Activated CD4-positive, alpha-beta T cell treated with anti-CD3 and anti-CD28 coated beads for 36 hours (primary cell): ENCODE measurements at regions of chr4 and their contacts with region 1.

Region 1: DNA sequence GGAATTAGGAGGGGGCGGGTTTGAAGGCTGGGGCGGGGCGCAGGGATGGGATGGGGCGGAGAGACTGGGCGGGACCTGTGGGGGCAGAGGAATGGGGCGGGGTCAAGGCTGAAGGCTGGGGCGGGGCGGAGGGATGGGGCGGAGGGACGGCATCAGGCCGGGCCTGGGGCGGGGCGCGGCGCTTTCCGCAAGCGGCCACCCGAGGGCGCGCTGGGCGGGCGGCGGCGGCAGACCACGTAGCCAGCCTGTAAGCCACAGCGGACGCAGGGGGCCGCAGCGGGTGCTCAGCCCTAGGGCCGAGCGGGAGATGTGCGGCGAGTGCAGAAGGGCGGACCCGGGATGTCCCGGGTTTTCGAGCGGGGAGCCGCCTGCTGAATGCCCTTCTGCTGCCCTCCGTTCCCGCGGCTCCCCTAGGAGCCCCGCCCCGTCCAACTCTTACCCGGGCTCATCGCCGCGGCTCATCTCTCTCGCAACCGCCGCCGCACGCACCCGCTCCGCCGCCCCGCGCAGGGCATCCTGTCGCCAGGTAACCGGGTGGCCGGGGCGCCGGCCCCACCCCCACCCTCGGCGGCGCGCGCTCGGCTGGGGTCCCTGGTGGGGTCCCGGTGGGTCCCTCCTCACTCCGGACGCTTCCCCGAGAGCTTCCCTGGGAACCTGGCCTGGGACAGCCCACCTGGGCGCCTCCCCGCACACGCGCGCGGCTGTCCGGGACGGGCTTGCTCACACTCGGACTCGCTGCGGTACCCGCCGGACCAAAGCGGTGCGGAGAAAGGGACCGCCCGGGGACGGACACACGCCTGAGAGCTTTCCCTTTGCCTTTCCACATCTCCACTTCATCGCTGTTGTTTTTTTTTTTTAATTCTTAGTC is at the start of gene CCDC110:
- DNase-seq: peak; percentile 98
- ATAC-seq: peak; percentile 97
- H3K4me3 Mint-ChIP-seq: peak within 1 kb of the TSS; percentile 82
- H3K27ac Mint-ChIP-seq: peak within 1 kb of the TSS; percentile 75
- H3K4me1 Mint-ChIP-seq: peaks cover 4% of the 10 kb centered on the region
- H3K27me3 Mint-ChIP-seq: peaks cover 9% of the 10 kb centered on the region
- total RNA-seq, gene CCDC110: 0.34 to 0.40 TPM

Region 2: DNA sequence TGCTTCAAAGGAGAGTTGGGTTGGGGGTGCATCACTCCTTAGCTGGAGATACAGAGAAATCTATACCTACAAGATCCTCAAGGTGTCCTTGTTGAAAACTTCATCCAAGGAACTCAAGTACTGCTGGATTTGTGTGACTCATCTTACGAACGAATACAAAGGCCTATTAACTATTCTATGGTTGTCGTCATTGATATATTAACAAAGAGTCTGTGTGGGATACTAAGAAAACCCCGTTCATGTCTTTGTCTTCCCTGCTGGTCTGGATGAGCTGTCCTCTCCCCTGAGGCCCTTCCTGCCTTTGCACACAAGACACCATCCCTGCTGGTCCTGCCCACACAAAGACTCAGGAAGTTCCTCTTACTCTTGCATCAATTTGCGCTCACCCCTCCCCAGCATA is 942.2 kb before region 1 on chr4:
- CTCF ChIA-PET with region 1: no interaction called
- POLR2A ChIA-PET with region 1: no interaction called
- intact Hi-C with region 1: loop called in 1 of 2 experiments (anchors 5 kb)
- DNase-seq: no peak
- ATAC-seq: no peak
- H3K4me3 Mint-ChIP-seq: no peak overlapping the region
- H3K27ac Mint-ChIP-seq: no peak overlapping the region
- H3K4me1 Mint-ChIP-seq: peaks cover 47% of the 10 kb centered on the region
- H3K27me3 Mint-ChIP-seq: no peaks in the 10 kb centered on the region

Region 3: DNA sequence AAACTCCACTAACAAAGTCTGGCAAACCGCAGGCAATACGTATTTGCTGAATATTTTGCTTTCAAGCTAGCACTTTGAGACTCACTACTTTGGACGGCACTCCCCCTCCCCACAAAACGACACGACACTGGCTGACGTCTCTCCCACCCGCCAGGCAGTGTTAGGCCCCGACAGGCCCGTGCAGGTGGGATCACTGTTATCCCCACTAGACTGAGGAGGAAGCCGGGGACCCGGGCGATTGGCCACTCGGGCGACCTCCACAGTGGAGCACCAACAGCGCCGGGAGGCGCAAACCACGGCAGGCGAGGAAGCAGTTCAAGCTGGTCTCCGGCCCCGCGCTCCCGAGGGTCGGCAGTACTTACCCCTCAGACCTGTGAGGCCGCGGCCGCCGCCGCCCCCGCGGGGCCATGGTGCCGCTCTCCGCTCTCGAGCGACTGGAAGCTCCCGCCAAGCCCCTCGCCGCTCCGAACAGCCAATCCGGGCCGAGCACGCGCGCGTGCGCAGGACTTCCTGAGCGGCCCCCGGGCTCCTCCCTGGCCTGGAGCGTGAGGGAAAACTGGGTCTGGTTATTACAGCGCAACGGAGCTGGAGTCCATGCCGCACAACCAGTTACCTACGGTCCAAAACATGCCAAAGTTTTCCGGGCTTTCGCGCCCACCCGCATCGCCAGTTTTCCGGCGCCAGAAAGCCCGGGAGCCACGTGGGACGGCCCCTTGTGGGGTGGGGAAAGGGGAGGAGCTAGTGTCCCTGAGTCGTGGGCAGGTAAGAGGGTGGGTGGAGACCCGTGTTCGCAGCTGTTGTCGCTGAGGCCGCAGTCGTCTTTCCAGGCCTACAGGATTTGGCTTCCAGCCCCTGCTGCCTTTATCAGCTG is 737.6 kb before region 1 on chr4 and contains the start of gene CENPU:
- CTCF ChIA-PET with region 1: no interaction called
- POLR2A ChIA-PET with region 1: no interaction called
- intact Hi-C with region 1: loop called in 1 of 2 experiments (anchors 1 kb)
- DNase-seq: peak; percentile 98
- ATAC-seq: peak; percentile 95
- H3K4me3 Mint-ChIP-seq: peak within 1 kb of the TSS; percentile 98
- H3K27ac Mint-ChIP-seq: peak within 1 kb of the TSS; percentile 94
- H3K4me1 Mint-ChIP-seq: peaks cover 24% of the 10 kb centered on the region
- H3K27me3 Mint-ChIP-seq: no peaks in the 10 kb centered on the region
- total RNA-seq, gene CENPU: 87.7 to 88.4 TPM

Region 4: DNA sequence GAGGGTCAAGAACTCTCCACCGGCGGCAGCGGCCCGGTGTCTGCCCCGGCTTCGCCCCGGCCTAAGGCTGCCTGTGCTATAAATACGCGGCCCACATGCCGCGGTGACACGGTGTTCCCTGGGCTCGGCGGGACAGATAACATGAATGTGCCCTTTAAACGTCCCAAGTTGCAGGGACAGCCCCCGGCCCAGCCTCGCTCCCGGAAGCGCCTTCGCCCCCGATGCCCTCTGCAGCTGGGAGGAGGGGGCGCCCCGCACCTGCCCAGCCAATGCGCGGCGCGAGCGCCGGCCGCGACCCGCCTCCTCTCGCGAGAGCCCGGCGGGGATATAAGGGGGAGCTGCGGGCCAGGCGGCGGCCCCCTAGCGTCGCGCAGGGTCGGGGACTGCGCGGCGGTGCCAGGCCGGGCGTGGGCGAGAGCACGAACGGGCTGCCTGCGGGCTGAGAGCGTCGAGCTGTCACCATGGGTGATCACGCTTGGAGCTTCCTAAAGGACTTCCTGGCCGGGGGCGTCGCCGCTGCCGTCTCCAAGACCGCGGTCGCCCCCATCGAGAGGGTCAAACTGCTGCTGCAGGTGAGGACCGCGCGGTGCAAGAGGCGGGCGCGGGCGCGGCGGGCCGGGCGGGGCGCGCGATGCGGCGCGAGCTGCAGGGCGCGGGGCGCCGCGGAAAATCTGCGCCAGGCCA is 328.4 kb before region 1 on chr4 and contains the start of gene SLC25A4:
- CTCF ChIA-PET with region 1: no interaction called
- POLR2A ChIA-PET with region 1: no interaction called
- intact Hi-C with region 1: loop called in 1 of 2 experiments (anchors 1 kb)
- DNase-seq: peak; percentile 91
- ATAC-seq: peak; percentile 95
- H3K4me3 Mint-ChIP-seq: peak within 1 kb of the TSS; percentile 74
- H3K27ac Mint-ChIP-seq: peak within 1 kb of the TSS; percentile 70
- H3K4me1 Mint-ChIP-seq: peaks cover 10% of the 10 kb centered on the region
- H3K27me3 Mint-ChIP-seq: peaks cover 33% of the 10 kb centered on the region
- total RNA-seq, gene SLC25A4: 4.2 to 5.0 TPM

Region 5: GRCh38 chr4:185425647-185426352 is 45.7 kb before region 1 on chr4 and contains the start of gene UFSP2:
- CTCF ChIA-PET with region 1: interaction called, 3 read pairs
- POLR2A ChIA-PET with region 1: no interaction called
- intact Hi-C with region 1: loop called (anchors 1 kb)
- DNase-seq: peak; percentile 93
- ATAC-seq: peak; percentile 91
- H3K4me3 Mint-ChIP-seq: peak within 1 kb of the TSS; percentile 83
- H3K27ac Mint-ChIP-seq: peak within 1 kb of the TSS; percentile 90
- H3K4me1 Mint-ChIP-seq: peaks cover 30% of the 10 kb centered on the region
- H3K27me3 Mint-ChIP-seq: peaks cover 2% of the 10 kb centered on the region
- total RNA-seq, gene UFSP2: 27.3 to 40.3 TPM

Region 6: GRCh38 chr4:185597532-185598188 is 126.2 kb after region 1 on chr4:
- CTCF ChIA-PET with region 1: interaction called, 4 read pairs
- POLR2A ChIA-PET with region 1: no interaction called
- intact Hi-C with region 1: loop called (anchors 1 kb)
- DNase-seq: peak; percentile 86
- ATAC-seq: peak; percentile 57
- H3K4me3 Mint-ChIP-seq: no peak overlapping the region
- H3K27ac Mint-ChIP-seq: no peak overlapping the region
- H3K4me1 Mint-ChIP-seq: peaks cover 3% of the 10 kb centered on the region
- H3K27me3 Mint-ChIP-seq: peaks cover 18% of the 10 kb centered on the region

Region 7: DNA sequence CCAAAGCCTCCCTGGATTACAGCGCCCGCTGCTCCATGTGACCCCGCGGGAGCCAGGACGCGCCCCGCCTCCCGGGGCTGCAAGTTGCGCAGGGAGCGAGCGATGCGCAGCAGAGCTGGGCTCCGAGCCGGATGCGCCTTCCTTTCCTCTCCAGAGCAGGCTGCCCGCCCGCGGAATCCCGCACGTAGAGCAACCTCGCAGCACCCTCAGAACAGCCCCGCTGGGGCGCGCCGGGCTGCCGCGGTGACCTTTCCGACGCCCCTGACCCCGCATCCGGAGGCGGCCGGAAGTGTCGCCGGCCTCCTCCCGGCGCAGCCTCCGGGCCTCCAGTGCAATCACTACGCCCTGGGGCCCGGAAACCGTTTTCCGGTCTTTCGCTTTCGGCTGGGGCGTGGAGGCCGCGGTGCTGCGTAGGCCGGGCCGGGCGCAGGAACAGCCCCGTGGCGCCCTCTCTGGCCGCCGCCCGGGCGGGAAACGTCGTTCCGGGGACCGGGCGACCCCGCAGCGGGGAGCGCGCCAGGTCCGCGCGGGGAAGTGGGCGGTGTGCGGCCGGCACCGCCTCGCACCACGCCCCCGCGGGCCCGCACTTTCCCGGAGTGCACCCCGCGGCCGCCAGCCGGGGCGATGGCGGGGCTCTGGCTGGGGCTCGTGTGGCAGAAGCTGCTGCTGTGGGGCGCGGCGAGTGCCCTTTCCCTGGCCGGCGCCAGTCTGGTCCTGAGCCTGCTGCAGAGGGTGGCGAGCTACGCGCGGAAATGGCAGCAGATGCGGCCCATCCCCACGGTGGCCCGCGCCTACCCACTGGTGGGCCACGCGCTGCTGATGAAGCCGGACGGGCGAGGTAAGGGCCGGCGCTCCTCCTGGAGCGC is 720.0 kb after region 1 on chr4 and contains the start of gene CYP4V2:
- CTCF ChIA-PET with region 1: no interaction called
- POLR2A ChIA-PET with region 1: no interaction called
- intact Hi-C with region 1: loop called in 1 of 2 experiments (anchors 1 kb)
- DNase-seq: peak; percentile 93
- ATAC-seq: peak; percentile 84
- H3K4me3 Mint-ChIP-seq: peak within 1 kb of the TSS; percentile 85
- H3K27ac Mint-ChIP-seq: peak within 1 kb of the TSS; percentile 94
- H3K4me1 Mint-ChIP-seq: peaks cover 37% of the 10 kb centered on the region
- H3K27me3 Mint-ChIP-seq: no peaks in the 10 kb centered on the region
- total RNA-seq, gene CYP4V2: 4.1 to 4.5 TPM